PC-3 (cell line): ENCODE measurements at regions of chr3 and their contacts with region 1.

Region 1: GRCh38 chr3:113514265-113514769 is 639 bp downstream of the SPICE1 start:
- DNase-seq: no peak
- ATAC-seq: no peak; the same call in 1 of the 2 replicates
- H3K4me3 ChIP-seq: peak overlapping the region; percentile 89
- H3K27ac ChIP-seq: peak overlapping the region; percentile 81
- H3K4me1 ChIP-seq: peaks cover 19% of the 10 kb centered on the region
- H3K27me3 ChIP-seq: no peaks in the 10 kb centered on the region
- CTCF ChIP-seq: no peak

Region 2: DNA sequence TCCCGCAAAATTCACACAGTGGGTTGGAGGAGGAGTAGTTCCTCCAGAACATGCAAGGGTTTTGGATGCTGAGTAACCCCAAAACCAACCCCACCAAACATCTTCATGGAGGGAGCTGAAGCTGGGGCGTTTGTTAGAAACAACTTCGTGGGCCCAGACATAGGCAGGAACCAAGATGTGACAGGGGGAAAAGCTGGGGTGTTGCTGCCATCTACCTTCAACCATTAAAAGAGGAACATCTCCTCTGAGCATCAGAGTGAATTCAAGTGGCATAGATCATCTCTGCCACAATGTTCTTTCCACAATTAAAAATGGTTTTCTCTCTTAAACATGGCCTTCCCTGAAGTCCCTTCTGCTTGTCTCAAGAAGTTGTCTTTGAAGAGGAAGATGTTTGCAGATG is 38.5 kb after region 1 on chr3:
- CTCF ChIA-PET with region 1: interaction called, 8 read pairs
- POLR2A ChIA-PET with region 1: interaction called, 3 read pairs
- intact Hi-C with region 1: loop called (anchors 1 kb)
- DNase-seq: peak; percentile 26
- ATAC-seq: no peak
- H3K4me3 ChIP-seq: no peak overlapping the region
- H3K27ac ChIP-seq: peak overlapping the region; percentile 96
- H3K4me1 ChIP-seq: peaks cover 63% of the 10 kb centered on the region
- H3K27me3 ChIP-seq: no peaks in the 10 kb centered on the region
- CTCF ChIP-seq: peak; percentile 41